CD4-positive, alpha-beta memory T cell (primary cell): ENCODE measurements at regions of chr15 and their contacts with region 1.

Region 1: GRCh38 chr15:99424978-99425656 is 140.7 kb upstream of the MEF2A start:
- DNase-seq: peak in 4 of 5 donors; percentile 20 to 56 (median 32)
- H3K4me3 ChIP-seq: no peak overlapping the region
- H3K4me3 Mint-ChIP-seq: peak overlapping the region; percentile 74 to 88 (median 80)
- H3K27ac ChIP-seq: peak overlapping the region; percentile 47
- H3K27ac Mint-ChIP-seq: peak overlapping the region; percentile 84 to 97 (median 95)
- H3K4me1 ChIP-seq: peaks cover 51% of the 10 kb centered on the region
- H3K4me1 Mint-ChIP-seq: peaks cover 22 to 62% (median 48%) of the 10 kb centered on the region in 4 donors
- H3K27me3 ChIP-seq: no peaks in the 10 kb centered on the region
- H3K27me3 Mint-ChIP-seq: no peaks in the 10 kb centered on the region

Region 2: GRCh38 chr15:99385865-99386264 is 39.3 kb before region 1 on chr15:
- CTCF ChIA-PET with region 1: no interaction called
- POLR2A ChIA-PET with region 1: no interaction called
- intact Hi-C with region 1: no loop called
- DNase-seq: no peak
- H3K4me3 ChIP-seq: no peak overlapping the region
- H3K4me3 Mint-ChIP-seq: peak overlapping the region in 3 of 8 donors; percentile 29 to 63 (median 62)
- H3K27ac ChIP-seq: no peak overlapping the region
- H3K27ac Mint-ChIP-seq: peak overlapping the region in 5 of 7 donors; percentile 5 to 84 (median 45)
- H3K4me1 ChIP-seq: peaks cover 17% of the 10 kb centered on the region
- H3K4me1 Mint-ChIP-seq: peaks cover 8 to 15% (median 11%) of the 10 kb centered on the region in 4 donors
- H3K27me3 ChIP-seq: no peaks in the 10 kb centered on the region
- H3K27me3 Mint-ChIP-seq: no peaks in the 10 kb centered on the region

Region 3: DNA sequence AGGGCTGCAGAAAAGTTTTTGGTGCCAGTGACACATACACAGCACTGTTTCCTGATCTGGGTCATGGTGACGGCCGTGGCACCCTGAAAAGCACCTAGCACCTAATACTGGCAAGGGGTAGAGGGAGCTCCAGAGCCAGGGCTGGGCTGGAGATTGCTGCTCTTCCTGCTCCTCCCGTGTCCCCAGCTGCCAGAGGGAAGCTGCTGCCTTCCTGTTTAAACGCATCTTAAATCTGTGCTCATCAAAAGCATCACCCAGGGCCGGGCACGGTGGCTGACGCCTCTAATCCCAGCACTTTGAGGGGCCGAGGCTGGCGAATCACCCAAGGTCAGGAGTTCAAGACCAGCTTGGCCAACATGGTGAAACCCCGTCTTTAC is 16.0 kb before region 1 on chr15:
- CTCF ChIA-PET with region 1: interaction called, 10 read pairs
- POLR2A ChIA-PET with region 1: interaction called, 3 read pairs
- intact Hi-C with region 1: no loop called
- DNase-seq: peak in 3 of 5 donors; percentile 7 to 26 (median 25)
- H3K4me3 ChIP-seq: no peak overlapping the region
- H3K4me3 Mint-ChIP-seq: no peak overlapping the region
- H3K27ac ChIP-seq: no peak overlapping the region
- H3K27ac Mint-ChIP-seq: no peak overlapping the region
- H3K4me1 ChIP-seq: peaks cover 8% of the 10 kb centered on the region
- H3K4me1 Mint-ChIP-seq: peaks cover 5 to 21% (median 6%) of the 10 kb centered on the region in 4 donors
- H3K27me3 ChIP-seq: no peaks in the 10 kb centered on the region
- H3K27me3 Mint-ChIP-seq: peaks cover 2 to 4% of the 10 kb centered on the region in 2 donors

Region 4: DNA sequence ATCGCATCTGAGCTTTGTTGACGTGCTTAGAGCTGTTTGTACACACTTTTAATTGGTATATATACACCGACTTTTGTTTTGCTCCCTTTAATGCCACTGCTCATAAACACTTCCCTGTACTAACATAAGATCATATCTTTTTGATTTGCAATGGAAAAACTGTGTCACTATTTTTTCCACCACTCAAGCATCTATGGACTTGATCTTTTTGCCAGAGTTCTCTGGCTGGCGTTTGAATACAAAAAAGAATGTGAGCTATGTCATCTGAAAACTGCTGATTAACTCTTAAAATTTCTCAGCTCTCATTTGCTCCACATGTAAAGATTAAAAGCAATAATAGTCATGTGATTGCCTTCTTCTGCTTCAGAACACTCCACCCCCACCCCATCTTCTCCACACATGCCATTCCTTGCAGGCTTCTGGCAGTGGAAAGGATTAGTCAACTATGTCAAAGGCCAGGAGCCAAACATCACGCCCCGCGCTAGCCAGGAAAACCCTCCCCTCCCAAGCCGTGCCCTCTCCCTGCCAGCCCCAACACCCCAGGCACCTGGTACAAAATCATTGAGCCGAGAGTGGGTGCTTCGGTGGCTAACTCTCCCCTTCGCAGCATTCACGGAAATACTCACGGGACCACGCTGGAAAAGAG is 17.3 kb after region 1 on chr15:
- CTCF ChIA-PET with region 1: interaction called, 3 read pairs
- POLR2A ChIA-PET with region 1: interaction called, 10 read pairs
- intact Hi-C with region 1: loop called (anchors 1 kb)
- DNase-seq: no peak
- H3K4me3 ChIP-seq: no peak overlapping the region
- H3K4me3 Mint-ChIP-seq: peak overlapping the region in 7 of 8 donors; percentile 4 to 63 (median 50)
- H3K27ac ChIP-seq: no peak overlapping the region
- H3K27ac Mint-ChIP-seq: peak overlapping the region; percentile 14 to 83 (median 71)
- H3K4me1 ChIP-seq: peaks cover 42% of the 10 kb centered on the region
- H3K4me1 Mint-ChIP-seq: peaks cover 16 to 54% (median 33%) of the 10 kb centered on the region in 4 donors
- H3K27me3 ChIP-seq: no peaks in the 10 kb centered on the region
- H3K27me3 Mint-ChIP-seq: no peaks in the 10 kb centered on the region

Region 5: GRCh38 chr15:99536422-99537040 is 111.4 kb after region 1 on chr15:
- CTCF ChIA-PET with region 1: no interaction called
- POLR2A ChIA-PET with region 1: no interaction called
- intact Hi-C with region 1: no loop called
- DNase-seq: no peak
- H3K4me3 ChIP-seq: no peak overlapping the region
- H3K4me3 Mint-ChIP-seq: no peak overlapping the region
- H3K27ac ChIP-seq: no peak overlapping the region
- H3K27ac Mint-ChIP-seq: no peak overlapping the region
- H3K4me1 ChIP-seq: no peaks in the 10 kb centered on the region
- H3K4me1 Mint-ChIP-seq: no peaks in the 10 kb centered on the region
- H3K27me3 ChIP-seq: no peaks in the 10 kb centered on the region
- H3K27me3 Mint-ChIP-seq: peaks cover 7% of the 10 kb centered on the region in 2 donors

Region 6: GRCh38 chr15:99755692-99756409 is 330.7 kb after region 1 on chr15:
- CTCF ChIA-PET with region 1: no interaction called
- POLR2A ChIA-PET with region 1: no interaction called
- intact Hi-C with region 1: no loop called
- DNase-seq: peak in 4 of 5 donors; percentile 56 to 67 (median 60)
- H3K4me3 ChIP-seq: no peak overlapping the region
- H3K4me3 Mint-ChIP-seq: no peak overlapping the region
- H3K27ac ChIP-seq: no peak overlapping the region
- H3K27ac Mint-ChIP-seq: no peak overlapping the region
- H3K4me1 ChIP-seq: no peaks in the 10 kb centered on the region
- H3K4me1 Mint-ChIP-seq: peaks cover 0 to 5% (median 1%) of the 10 kb centered on the region in 4 donors
- H3K27me3 ChIP-seq: no peaks in the 10 kb centered on the region
- H3K27me3 Mint-ChIP-seq: peaks cover 0 to 4% of the 10 kb centered on the region in 2 donors